A673 (cell line): ENCODE measurements at regions of chr18 and their contacts with region 1.

Region 1: GRCh38 chr18:45621061-45621511 is 5.8 kb downstream of the SLC14A2 start:
- DNase-seq: peak; percentile 67
- H3K4me3 ChIP-seq: no peak overlapping the region
- H3K27ac ChIP-seq: no peak overlapping the region
- H3K4me1 ChIP-seq: no peaks in the 10 kb centered on the region
- H3K27me3 ChIP-seq: no peaks in the 10 kb centered on the region
- CTCF ChIP-seq: peak; percentile 89

Region 2: DNA sequence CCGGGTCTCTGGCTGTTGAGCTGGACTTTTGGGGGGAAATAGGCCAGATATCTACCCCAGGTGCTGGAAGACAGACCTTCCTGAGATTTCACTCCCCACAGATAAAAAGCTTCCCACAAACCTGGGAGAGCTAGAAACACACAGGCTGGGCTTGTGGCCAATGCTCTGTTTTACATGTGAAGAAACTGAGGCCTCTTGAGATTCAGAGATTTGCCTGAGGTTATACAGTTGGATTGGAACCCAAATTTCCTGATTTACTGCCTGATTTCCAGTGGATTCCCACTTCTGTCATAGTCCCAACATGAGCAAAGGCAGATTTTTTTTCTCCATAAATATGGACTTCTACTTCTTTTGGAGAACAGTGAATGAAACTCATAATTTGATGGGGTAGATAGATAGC is 580.2 kb before region 1 on chr18:
- CTCF ChIA-PET with region 1: interaction called, 13 read pairs
- POLR2A ChIA-PET with region 1: no interaction called
- intact Hi-C with region 1: no loop called
- DNase-seq: no peak
- H3K4me3 ChIP-seq: no peak overlapping the region
- H3K27ac ChIP-seq: no peak overlapping the region
- H3K4me1 ChIP-seq: no peaks in the 10 kb centered on the region
- H3K27me3 ChIP-seq: no peaks in the 10 kb centered on the region
- CTCF ChIP-seq: no peak

Region 3: GRCh38 chr18:45341454-45341853 is 279.6 kb before region 1 on chr18:
- CTCF ChIA-PET with region 1: no interaction called
- POLR2A ChIA-PET with region 1: no interaction called
- intact Hi-C with region 1: no loop called
- DNase-seq: no peak
- H3K4me3 ChIP-seq: no peak overlapping the region
- H3K27ac ChIP-seq: no peak overlapping the region
- H3K4me1 ChIP-seq: no peaks in the 10 kb centered on the region
- H3K27me3 ChIP-seq: peaks cover 6% of the 10 kb centered on the region
- CTCF ChIP-seq: 0 out of 2 replicates have a peak, but pooled peaks have one; percentile 7

Region 4: DNA sequence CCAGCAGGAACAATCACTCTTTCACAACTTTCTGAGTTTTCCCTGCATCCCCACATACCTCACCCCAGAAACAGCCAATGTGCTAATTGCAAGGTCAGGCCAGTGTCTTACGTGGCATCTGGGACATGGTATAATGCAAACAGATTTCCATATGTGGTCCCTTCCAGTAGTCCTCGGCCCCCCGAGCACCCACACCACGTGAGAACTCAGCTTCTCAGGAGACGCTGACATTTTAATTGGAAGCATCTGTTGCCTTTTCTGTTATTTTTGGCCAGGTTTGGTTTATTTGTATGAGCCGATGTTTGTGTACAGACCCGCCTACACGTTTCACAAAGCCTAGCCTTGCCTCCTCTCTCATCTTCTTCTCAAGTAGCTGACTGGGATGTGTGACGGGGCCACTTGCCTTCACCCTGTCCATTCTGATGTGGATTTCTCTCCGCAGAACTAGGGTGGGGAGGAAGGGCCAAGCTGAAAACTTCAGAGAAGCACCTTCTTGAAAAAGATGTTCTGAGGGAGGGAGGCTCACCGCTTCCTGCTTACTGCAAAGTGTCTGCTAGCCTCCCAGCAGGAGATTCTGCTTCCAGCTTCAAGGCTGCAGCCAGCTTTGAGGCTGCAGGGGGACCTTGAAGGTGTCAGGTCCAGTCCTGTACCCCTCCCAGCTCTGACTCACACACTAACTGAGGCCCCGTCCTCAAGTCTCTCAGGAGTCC is 115.4 kb before region 1 on chr18:
- CTCF ChIA-PET with region 1: no interaction called
- POLR2A ChIA-PET with region 1: no interaction called
- intact Hi-C with region 1: no loop called
- DNase-seq: no peak
- H3K4me3 ChIP-seq: no peak overlapping the region
- H3K27ac ChIP-seq: no peak overlapping the region
- H3K4me1 ChIP-seq: no peaks in the 10 kb centered on the region
- H3K27me3 ChIP-seq: peaks cover 20% of the 10 kb centered on the region
- CTCF ChIP-seq: no peak

Region 5: GRCh38 chr18:45874491-45875184 is 253.6 kb after region 1 on chr18:
- CTCF ChIA-PET with region 1: no interaction called
- POLR2A ChIA-PET with region 1: no interaction called
- intact Hi-C with region 1: no loop called
- DNase-seq: peak; percentile 3
- H3K4me3 ChIP-seq: no peak overlapping the region
- H3K27ac ChIP-seq: no peak overlapping the region
- H3K4me1 ChIP-seq: no peaks in the 10 kb centered on the region
- H3K27me3 ChIP-seq: no peaks in the 10 kb centered on the region
- CTCF ChIP-seq: no peak

Region 6: GRCh38 chr18:45930963-45931362 is 309.9 kb after region 1 on chr18:
- CTCF ChIA-PET with region 1: no interaction called
- POLR2A ChIA-PET with region 1: no interaction called
- intact Hi-C with region 1: no loop called
- DNase-seq: no peak
- H3K4me3 ChIP-seq: no peak overlapping the region
- H3K27ac ChIP-seq: no peak overlapping the region
- H3K4me1 ChIP-seq: no peaks in the 10 kb centered on the region
- H3K27me3 ChIP-seq: no peaks in the 10 kb centered on the region
- CTCF ChIP-seq: no peak